Caco-2 (cell line): ENCODE measurements at regions of chr4 and their contacts with region 1.

Region 1: DNA sequence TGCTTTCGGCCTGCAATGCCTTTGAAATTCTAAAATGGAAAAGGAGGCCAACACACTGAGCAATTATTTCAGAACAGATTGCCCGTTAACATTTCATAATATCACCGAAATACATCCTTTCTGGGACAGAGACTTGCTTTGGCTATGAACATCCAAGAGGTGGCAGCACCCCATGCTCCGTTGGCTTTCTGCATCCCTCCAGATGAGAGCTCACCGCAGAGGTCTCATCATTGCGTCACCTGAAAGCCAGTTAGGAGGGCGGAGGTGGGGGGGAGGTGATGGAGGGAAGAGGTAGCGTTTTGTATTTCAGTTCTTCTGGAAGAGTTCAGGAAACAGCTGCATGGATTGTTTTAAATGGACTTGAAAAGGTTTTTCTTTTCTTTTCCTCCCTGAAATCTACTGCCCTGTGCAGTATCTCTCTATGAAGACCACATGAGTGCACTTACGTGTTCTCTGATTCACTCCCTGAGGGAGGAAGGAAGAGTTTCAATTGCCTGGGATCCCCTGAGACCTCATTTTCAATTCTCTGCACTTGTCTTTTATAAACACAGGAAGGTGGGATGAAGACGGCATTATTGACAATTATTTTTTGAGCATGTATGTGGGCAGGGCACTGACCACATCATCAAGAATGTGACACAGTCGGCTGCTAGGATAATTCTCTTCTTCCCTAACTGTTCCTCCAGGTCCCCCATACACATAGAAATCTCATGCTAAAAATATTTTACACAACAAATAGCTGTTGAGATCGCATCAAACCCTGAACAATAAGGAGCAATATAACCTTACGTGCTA is 166.9 kb upstream of the PGRMC2 start:
- DNase-seq: peak; percentile 78 to 82
- H3K4me3 ChIP-seq: no peak overlapping the region
- H3K4me3 Mint-ChIP-seq: no peak overlapping the region
- H3K27ac Mint-ChIP-seq: no peak overlapping the region
- H3K4me1 ChIP-seq: no peaks in the 10 kb centered on the region
- H3K4me1 Mint-ChIP-seq: peaks cover 7% of the 10 kb centered on the region
- H3K27me3 ChIP-seq: no peaks in the 10 kb centered on the region
- H3K27me3 Mint-ChIP-seq: no peaks in the 10 kb centered on the region
- CTCF ChIP-seq: peak; percentile 72 to 77

Region 2: DNA sequence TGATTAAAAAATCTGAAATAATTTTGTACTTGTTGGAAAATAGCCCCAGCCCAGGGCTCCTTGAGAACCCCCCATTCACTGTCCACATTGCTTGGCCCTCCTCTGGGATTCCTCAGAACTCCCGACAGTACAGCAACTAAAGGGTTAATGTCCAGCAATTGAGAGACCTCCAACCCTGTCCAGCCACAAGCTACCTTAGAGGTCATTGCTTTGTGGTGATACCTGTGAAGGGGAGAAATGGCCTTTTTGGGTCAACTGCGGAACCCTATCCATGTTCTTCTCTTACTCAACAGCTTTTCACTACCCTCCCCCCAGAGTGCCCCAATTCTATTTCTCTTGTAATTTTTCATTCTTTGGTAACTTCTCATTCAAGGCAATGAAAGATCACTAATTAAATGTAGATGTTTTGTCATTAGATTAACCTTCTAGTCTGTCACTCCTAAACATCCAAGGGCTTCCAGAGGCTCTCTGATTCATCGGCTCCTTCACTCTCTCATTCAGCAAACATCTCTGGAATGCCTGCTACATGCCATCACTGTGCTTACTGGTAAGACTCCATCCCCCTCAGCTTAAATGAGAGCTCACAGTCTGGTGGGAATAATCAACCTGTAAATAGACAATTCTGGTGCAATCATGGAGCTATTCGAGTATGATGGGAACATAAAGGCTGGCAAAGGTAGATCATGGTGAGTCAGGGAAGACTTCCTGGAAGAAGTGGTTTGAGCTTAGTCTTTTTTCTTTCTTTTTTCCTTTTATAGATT is 74.5 kb after region 1 on chr4:
- CTCF ChIA-PET with region 1: interaction called, 4 read pairs
- POLR2A ChIA-PET with region 1: no interaction called
- intact Hi-C with region 1: loop called (anchors 1 kb)
- DNase-seq: peak; percentile 69 to 80
- H3K4me3 ChIP-seq: no peak overlapping the region
- H3K4me3 Mint-ChIP-seq: peak overlapping the region; percentile 46
- H3K27ac Mint-ChIP-seq: peak overlapping the region; percentile 95
- H3K4me1 ChIP-seq: peaks cover 49% of the 10 kb centered on the region
- H3K4me1 Mint-ChIP-seq: peaks cover 37% of the 10 kb centered on the region
- H3K27me3 ChIP-seq: no peaks in the 10 kb centered on the region
- H3K27me3 Mint-ChIP-seq: no peaks in the 10 kb centered on the region
- CTCF ChIP-seq: no peak

Region 3: GRCh38 chr4:128565565-128566186 is 111.2 kb after region 1 on chr4:
- CTCF ChIA-PET with region 1: interaction called, 6 read pairs
- POLR2A ChIA-PET with region 1: no interaction called
- intact Hi-C with region 1: loop called (anchors 1 kb)
- DNase-seq: peak; percentile 62 to 70
- H3K4me3 ChIP-seq: no peak overlapping the region
- H3K4me3 Mint-ChIP-seq: no peak overlapping the region
- H3K27ac Mint-ChIP-seq: no peak overlapping the region
- H3K4me1 ChIP-seq: peaks cover 28% of the 10 kb centered on the region
- H3K4me1 Mint-ChIP-seq: peaks cover 43% of the 10 kb centered on the region
- H3K27me3 ChIP-seq: no peaks in the 10 kb centered on the region
- H3K27me3 Mint-ChIP-seq: no peaks in the 10 kb centered on the region
- CTCF ChIP-seq: peak; percentile 40 to 69

Region 4: GRCh38 chr4:128782076-128782715 is 327.7 kb after region 1 on chr4:
- CTCF ChIA-PET with region 1: no interaction called
- POLR2A ChIA-PET with region 1: no interaction called
- intact Hi-C with region 1: loop called (anchors 2 kb)
- DNase-seq: peak; percentile 58 to 62
- H3K4me3 ChIP-seq: no peak overlapping the region
- H3K4me3 Mint-ChIP-seq: no peak overlapping the region
- H3K27ac Mint-ChIP-seq: no peak overlapping the region
- H3K4me1 ChIP-seq: peaks cover 3% of the 10 kb centered on the region
- H3K4me1 Mint-ChIP-seq: peaks cover 3% of the 10 kb centered on the region
- H3K27me3 ChIP-seq: no peaks in the 10 kb centered on the region
- H3K27me3 Mint-ChIP-seq: no peaks in the 10 kb centered on the region
- CTCF ChIP-seq: peak; percentile 41 to 45